RWPE1 (cell line): ENCODE measurements at regions of chr20 and their contacts with region 1.

Region 1: DNA sequence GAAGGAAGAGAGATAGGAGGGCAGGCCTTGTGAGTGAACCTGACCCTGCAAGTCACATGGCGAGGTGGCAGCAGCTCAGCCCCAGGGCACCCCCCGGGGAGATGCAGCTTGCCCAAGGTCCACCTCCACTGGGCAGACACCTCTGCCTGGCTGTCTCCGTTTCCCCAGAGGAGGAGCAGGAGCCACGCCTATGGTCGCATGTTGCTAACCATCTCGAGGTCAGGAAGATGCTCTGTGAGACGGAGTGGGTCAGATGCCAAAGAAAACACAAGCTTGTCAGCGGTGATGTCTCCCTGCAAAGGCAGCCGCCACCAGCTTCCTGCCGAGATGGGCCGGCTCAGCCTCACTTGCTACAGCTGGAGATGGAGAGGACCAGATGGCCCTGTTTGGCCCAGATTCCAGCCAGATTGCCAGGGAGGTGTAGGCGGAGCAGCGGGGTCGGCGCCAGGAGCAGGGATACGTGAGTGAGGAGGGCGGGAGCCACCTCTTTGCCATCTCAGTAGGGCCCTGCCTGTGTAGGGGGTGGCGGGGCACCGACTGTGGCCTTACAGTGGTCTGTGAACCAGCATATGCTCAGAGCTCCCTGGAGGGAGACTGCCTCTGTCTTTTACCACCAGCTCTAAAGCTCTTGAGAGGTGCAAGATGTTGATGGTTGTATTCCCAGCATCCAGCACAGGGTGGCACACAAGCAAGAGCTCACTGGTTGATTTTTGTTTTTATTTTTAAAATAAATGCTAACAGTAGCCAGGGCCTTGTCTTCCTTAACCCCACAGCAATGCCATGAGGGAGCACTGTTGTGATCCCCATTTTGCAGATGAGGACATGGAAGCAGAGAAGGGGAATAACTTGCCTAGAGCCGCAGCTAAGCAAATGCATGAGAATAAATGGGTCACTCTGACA is 42.9 kb upstream of the FAM83D start:
- DNase-seq: no peak
- H3K27ac ChIP-seq: no peak overlapping the region
- CTCF ChIP-seq: no peak

Region 2: GRCh38 chr20:38893565-38894090 is 10.3 kb after region 1 on chr20:
- CTCF ChIA-PET with region 1: interaction called, 17 read pairs
- POLR2A ChIA-PET with region 1: no interaction called
- DNase-seq: peak; percentile 91
- H3K27ac ChIP-seq: no peak overlapping the region
- CTCF ChIP-seq: peak; percentile 99